MCF 10A (cell line): ENCODE measurements at regions of chr7 and their contacts with region 1.

Region 1: GRCh38 chr7:99910976-99911375 is 8.4 kb downstream of the TRIM4 start:
- DNase-seq: no peak
- H3K4me3 Mint-ChIP-seq: no peak overlapping the region
- H3K27ac Mint-ChIP-seq: no peak overlapping the region
- H3K4me1 Mint-ChIP-seq: peaks cover 34% of the 10 kb centered on the region
- H3K27me3 Mint-ChIP-seq: no peaks in the 10 kb centered on the region
- CTCF ChIP-seq: no peak

Region 2: DNA sequence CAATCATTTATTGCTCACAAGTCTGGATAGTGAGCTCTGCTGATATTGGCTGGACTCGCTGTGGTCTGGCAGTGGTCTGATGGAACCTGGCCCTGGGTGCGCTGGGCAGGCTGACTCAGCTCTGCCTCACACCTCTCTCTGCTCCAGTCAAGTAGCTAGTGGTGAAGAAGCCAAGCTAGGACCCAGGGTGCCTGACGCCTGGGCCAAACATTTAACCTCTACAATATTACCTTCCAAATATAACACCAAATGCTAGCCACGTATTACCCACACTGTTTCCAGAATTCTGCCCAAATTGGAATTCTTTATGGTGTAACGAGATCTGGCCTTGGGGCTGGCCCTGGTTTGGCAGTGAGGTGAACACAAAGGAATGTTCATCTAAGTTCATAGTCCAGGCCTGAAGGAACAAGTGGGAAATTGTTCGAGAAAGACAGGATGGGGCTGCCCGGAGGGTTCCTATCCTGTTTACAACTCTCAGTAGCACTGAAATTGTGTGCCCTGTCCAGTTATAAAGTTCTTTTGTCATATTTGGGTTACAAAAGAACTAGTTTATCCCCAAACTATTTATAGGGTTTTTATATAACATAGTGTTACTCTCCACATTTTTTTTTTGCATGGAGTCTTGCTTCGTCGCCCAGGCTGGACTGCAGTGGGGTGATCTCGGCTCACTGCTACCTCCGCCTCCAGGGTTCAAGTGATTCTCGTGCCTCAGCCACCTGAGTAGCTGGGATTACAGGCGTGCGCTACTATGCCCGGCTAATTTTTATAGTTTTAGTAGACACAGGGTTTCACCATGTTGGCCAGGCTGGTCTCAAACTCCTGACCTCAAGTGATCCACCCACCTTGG is 50.5 kb before region 1 on chr7:
- CTCF ChIA-PET with region 1: no interaction called
- POLR2A ChIA-PET with region 1: no interaction called
- intact Hi-C with region 1: loop called (anchors 2 kb)
- DNase-seq: peak; percentile 82
- H3K4me3 Mint-ChIP-seq: no peak overlapping the region
- H3K27ac Mint-ChIP-seq: peak overlapping the region; percentile 59
- H3K4me1 Mint-ChIP-seq: peaks cover 14% of the 10 kb centered on the region
- H3K27me3 Mint-ChIP-seq: no peaks in the 10 kb centered on the region
- CTCF ChIP-seq: no peak

Region 3: GRCh38 chr7:99975782-99976521 is 65.0 kb after region 1 on chr7 and contains the start of gene AZGP1:
- CTCF ChIA-PET with region 1: interaction called, 26 read pairs
- POLR2A ChIA-PET with region 1: interaction called, 3 read pairs
- intact Hi-C with region 1: loop called (anchors 1 kb)
- DNase-seq: peak; percentile 33
- H3K4me3 Mint-ChIP-seq: no peak within 1 kb of the TSS
- H3K27ac Mint-ChIP-seq: no peak within 1 kb of the TSS
- H3K4me1 Mint-ChIP-seq: peaks cover 13% of the 10 kb centered on the region
- H3K27me3 Mint-ChIP-seq: no peaks in the 10 kb centered on the region
- CTCF ChIP-seq: no peak
- total RNA-seq, gene AZGP1: 0.58 and 0.59 TPM in 2 replicates